K562 (cell line): ENCODE measurements at regions of chr19 and their contacts with region 1.

Region 1: DNA sequence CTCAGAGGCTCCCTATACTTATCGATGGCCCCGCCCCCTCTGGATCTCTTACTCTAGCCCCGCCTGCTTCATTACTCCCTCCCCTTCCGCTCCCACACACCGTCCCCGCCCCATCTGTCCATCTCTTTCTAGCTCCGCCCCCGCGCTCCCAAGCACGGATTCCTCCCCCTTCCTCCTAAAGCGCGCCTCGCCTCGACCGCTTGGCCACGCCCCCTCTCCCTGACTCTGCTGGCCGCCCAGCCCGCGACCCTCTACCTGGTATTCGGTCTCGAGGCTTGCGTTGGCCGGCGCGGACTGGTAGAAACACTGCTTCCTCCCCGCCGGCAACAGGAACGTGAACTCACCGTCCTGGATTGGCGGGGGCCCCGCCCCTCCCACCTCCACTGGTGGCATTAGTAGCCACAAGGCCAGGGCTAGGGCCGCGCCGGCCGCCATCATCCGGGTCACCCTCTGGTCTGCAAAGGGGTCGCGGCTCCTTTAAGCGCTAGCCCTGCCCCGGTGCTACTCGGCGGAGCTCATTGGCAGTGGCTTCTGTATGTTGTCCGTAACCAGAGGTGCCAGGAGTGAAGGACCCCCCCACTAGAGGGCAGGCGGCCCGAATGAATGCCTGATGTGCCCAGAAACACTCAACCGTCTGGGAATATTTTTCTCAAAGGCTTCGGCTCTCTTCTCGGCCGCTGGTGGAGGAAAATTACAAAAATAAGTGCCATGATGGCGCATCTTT is at the start of gene TMED1:
- DNase-seq: peak; percentile 92 to 100 (median 98)
- ATAC-seq: peak; percentile 91
- H3K4me3 ChIP-seq: peak within 1 kb of the TSS; percentile 63
- H3K27ac ChIP-seq: peak within 1 kb of the TSS; percentile 97
- H3K4me1 ChIP-seq: peaks cover 17 to 51% of the 10 kb centered on the region in 2 experiments; a peak in 4 of 5 replicates
- H3K27me3 ChIP-seq: no peaks in the 10 kb centered on the region
- CTCF ChIP-seq: peak; percentile 9 to 22 (median 20); a peak in 1 of 6 replicates
- EP300 ChIP-seq: no peak
- POLR2A ChIP-seq: peak; percentile 94
- RAD21 ChIP-seq: peak in 1 of 2 experiments; percentile 23; a peak in 2 of 4 replicates
- polyA plus RNA-seq, gene TMED1: 0.86 to 5.9 TPM

Region 2: GRCh38 chr19:10820173-10820572 is 15.7 kb before region 1 on chr19:
- CTCF ChIA-PET with region 1: no interaction called
- POLR2A ChIA-PET with region 1: interaction called, 58 read pairs
- in situ Hi-C with region 1: no loop called
- intact Hi-C with region 1: no loop called
- DNase-seq: peak; percentile 42 to 52 (median 50)
- ATAC-seq: peak; percentile 78
- H3K4me3 ChIP-seq: no peak overlapping the region
- H3K27ac ChIP-seq: no peak overlapping the region; the same call in 2 of the 3 replicates
- H3K4me1 ChIP-seq: peaks cover 12 to 60% of the 10 kb centered on the region in 2 experiments; a peak in 4 of 5 replicates
- H3K27me3 ChIP-seq: no peaks in the 10 kb centered on the region
- CTCF ChIP-seq: peak; percentile 44 to 70 (median 54)
- EP300 ChIP-seq: no peak
- POLR2A ChIP-seq: no peak
- RAD21 ChIP-seq: peak in 1 of 2 experiments; percentile 49; a peak in 2 of 4 replicates

Region 3: DNA sequence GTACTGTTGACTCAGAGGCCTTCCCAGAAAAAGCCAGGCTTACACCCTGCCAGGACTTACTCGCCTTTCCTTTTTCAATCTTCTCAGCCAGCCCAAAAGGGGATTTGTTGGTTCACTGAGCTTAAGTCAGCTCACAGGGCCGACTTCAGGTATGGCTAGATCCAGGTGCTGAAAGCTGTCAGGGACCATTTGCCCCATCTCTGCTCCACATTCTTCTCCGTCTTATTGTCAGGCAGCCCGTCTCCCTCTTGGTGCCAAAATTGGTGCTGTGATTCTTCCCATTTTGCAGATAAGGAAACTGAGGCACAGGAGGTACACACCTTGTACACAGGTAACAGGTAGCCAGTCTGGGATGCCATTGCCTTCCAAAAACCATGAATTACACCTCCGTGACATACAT is 14.7 kb after region 1 on chr19:
- CTCF ChIA-PET with region 1: no interaction called
- POLR2A ChIA-PET with region 1: interaction called, 10 read pairs
- in situ Hi-C with region 1: no loop called
- intact Hi-C with region 1: no loop called
- DNase-seq: no peak
- ATAC-seq: no peak
- H3K4me3 ChIP-seq: no peak overlapping the region
- H3K27ac ChIP-seq: no peak overlapping the region
- H3K4me1 ChIP-seq: peaks cover 0 to 8% of the 10 kb centered on the region in 2 experiments; a peak in 1 of 5 replicates
- H3K27me3 ChIP-seq: no peaks in the 10 kb centered on the region
- CTCF ChIP-seq: no peak
- EP300 ChIP-seq: no peak
- POLR2A ChIP-seq: no peak
- RAD21 ChIP-seq: no peak

Region 4: GRCh38 chr19:10864538-10864899 is 28.6 kb after region 1 on chr19:
- CTCF ChIA-PET with region 1: no interaction called
- POLR2A ChIA-PET with region 1: interaction called, 20 read pairs
- in situ Hi-C with region 1: no loop called
- intact Hi-C with region 1: no loop called
- DNase-seq: peak; percentile 83 to 92 (median 88)
- ATAC-seq: peak; percentile 91
- H3K4me3 ChIP-seq: no peak overlapping the region
- H3K27ac ChIP-seq: no peak overlapping the region; the same call in 2 of the 3 replicates
- H3K4me1 ChIP-seq: peaks cover 24 to 36% of the 10 kb centered on the region in 2 experiments; a peak in 4 of 5 replicates
- H3K27me3 ChIP-seq: no peaks in the 10 kb centered on the region
- CTCF ChIP-seq: peak; percentile 88 to 97 (median 93)
- EP300 ChIP-seq: no peak
- POLR2A ChIP-seq: no peak
- RAD21 ChIP-seq: peak; percentile 68 to 70